Activated CD4-positive, alpha-beta memory T cell treated with anti-CD3 and anti-CD28 coated beads for 36 hours (primary cell): ENCODE measurements at regions of chr12 and their contacts with region 1.

Region 1: GRCh38 chr12:111942557-111942956 is 70.4 kb downstream of the TMEM116 start:
- DNase-seq: no peak
- H3K4me3 Mint-ChIP-seq: no peak overlapping the region
- H3K27ac Mint-ChIP-seq: peak overlapping the region; percentile 64
- H3K4me1 Mint-ChIP-seq: peaks cover 22% of the 10 kb centered on the region
- H3K27me3 Mint-ChIP-seq: no peaks in the 10 kb centered on the region

Region 2: GRCh38 chr12:111993292-111994150 is 51.0 kb after region 1 on chr12:
- CTCF ChIA-PET with region 1: interaction called, 4 read pairs
- POLR2A ChIA-PET with region 1: no interaction called
- intact Hi-C with region 1: loop called (anchors 5 kb)
- DNase-seq: peak; percentile 44
- H3K4me3 Mint-ChIP-seq: peak overlapping the region; percentile 78
- H3K27ac Mint-ChIP-seq: peak overlapping the region; percentile 40
- H3K4me1 Mint-ChIP-seq: peaks cover 72% of the 10 kb centered on the region
- H3K27me3 Mint-ChIP-seq: no peaks in the 10 kb centered on the region

Region 3: DNA sequence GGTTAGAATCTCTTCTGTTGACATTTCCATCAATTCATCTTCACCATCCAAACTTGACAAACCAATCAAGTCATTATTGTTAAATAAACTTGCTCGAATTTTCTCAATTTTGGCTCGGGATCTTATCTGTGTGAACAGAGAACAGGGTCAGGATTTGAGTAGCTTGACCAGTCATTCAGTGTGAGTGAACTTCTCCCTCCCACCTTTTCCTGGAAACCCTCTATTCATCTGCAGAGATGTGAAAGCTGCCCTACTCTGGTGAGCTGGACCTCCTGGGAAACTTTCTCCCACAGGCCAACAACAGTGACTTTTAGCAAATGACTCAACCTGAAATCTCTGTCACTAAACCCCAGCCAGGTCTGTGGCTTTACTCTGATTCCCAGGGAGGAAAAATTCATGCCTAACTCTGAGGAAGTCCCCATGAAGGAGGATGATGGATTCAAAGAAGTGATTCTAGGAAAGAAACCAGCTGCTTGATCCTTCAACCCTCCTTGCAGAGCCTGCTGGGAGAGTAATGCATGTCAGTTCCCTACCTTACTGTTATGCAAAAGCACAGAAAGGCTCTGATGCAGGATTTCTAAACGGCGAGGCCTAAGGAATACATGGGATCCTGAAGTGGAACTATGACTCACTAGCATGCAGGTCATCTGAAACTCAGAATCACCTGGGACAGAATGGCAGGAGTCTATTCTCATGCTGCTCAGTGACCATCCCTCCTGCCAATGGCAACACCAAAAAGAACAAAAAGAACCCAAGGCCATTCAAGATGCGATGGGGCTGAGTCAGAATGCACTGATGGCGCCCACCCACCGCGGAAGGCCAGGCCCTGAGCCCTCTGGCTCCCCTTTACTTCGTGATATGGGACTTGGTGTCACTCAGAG is 240.8 kb after region 1 on chr12:
- CTCF ChIA-PET with region 1: no interaction called
- POLR2A ChIA-PET with region 1: no interaction called
- intact Hi-C with region 1: loop called (anchors 10 kb)
- DNase-seq: peak; percentile 69
- H3K4me3 Mint-ChIP-seq: no peak overlapping the region
- H3K27ac Mint-ChIP-seq: peak overlapping the region; percentile 46
- H3K4me1 Mint-ChIP-seq: peaks cover 20% of the 10 kb centered on the region
- H3K27me3 Mint-ChIP-seq: no peaks in the 10 kb centered on the region

Region 4: DNA sequence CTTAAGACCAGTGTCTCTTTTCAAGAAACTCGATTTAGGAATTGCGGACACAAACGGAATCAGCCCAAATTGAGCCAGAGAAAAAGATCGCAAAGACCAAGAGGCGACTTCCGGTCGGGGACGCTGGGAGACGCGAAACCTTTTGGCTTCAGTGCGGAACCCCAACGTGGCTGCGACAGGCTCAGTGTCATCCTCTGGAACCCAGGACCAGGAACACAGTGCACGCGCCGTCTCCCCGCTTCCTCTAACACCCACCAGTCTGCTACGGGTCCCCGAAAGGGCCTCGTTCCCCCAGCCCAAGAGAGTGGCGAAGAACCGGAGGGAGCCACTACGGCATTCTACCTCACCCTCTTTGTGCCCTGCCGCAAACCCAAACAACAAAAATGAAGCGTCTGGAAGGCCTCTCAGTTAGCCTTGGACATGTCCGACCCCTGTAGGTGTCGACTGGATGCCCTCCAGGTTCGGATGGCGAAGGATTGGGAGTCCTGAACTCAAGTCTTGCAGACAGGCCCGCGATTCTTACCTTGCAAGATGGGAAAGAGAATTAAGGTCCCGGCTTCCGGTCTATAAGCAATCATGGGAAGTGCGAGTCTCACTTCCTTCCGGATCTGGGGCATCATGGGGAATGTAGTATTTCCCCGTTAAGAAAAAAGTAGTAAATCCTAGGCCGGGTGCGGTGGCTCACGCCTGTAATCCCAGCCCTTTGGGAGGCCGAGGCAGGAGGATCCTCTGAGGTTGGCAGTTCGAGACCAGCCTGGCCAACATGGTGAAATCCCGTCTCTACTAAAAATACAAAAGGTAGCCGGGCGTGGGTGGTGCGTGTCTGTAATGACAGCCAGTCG is 466.7 kb after region 1 on chr12 and contains the start of gene RPL6:
- CTCF ChIA-PET with region 1: interaction called, 5 read pairs
- POLR2A ChIA-PET with region 1: no interaction called
- intact Hi-C with region 1: loop called (anchors 5 kb)
- DNase-seq: peak; percentile 86
- H3K4me3 Mint-ChIP-seq: peak within 1 kb of the TSS; percentile 100
- H3K27ac Mint-ChIP-seq: peak within 1 kb of the TSS; percentile 100
- H3K4me1 Mint-ChIP-seq: peaks cover 37% of the 10 kb centered on the region
- H3K27me3 Mint-ChIP-seq: no peaks in the 10 kb centered on the region
- total RNA-seq, gene RPL6: 1,833 TPM